Ascending aorta (tissue), 2 donors: ENCODE measurements at regions of chr11 and their contacts with region 1.

Region 1: DNA sequence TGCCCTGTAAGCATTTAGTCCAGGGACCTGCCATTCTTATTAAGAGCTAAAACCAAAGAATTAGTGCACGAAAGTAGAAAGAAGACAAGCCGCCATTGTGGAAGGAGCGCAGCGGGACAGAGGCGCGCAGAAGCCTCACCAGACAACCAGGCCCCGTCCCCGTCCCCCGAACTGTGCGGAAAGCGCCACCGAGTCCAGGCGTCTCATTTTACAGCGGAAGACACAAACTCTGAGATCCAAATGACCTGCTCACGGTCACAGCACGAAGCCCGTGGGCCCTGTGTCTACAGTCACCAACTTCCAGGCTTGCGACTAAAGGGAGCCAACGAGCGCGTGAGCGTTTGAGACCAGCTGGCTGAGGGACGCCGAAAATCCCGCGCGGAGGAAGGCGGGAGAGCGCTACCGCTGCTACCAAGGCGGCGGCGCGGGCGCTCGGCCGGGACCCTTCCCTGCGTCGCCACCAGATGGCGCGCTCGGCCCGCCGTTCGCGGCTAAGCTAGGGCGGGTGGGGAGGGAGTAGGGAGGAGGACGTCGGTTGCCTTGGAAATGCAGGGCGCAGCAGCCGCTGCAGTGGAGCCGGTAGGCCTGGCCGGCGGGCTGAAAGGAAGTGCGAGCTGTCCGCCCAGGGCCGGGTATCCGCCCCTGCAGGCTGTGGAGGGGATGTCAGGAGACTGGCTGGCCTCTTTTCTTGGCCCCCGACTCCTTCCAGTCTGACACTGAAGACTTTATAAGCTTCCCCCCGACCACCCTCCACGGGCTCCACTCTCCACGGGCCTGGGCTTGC is 434 bp upstream of the CCDC83 start:
- DNase-seq: peak; percentile 65 to 95
- H3K4me3 ChIP-seq: peak overlapping the region; percentile 73 to 77
- H3K27ac ChIP-seq: peak overlapping the region; percentile 79 to 83
- H3K4me1 ChIP-seq: peaks cover 0 to 7% of the 10 kb centered on the region in 2 donors
- H3K27me3 ChIP-seq: no peaks in the 10 kb centered on the region
- CTCF ChIP-seq: peak; percentile 94 to 99 (median 99)

Region 2: DNA sequence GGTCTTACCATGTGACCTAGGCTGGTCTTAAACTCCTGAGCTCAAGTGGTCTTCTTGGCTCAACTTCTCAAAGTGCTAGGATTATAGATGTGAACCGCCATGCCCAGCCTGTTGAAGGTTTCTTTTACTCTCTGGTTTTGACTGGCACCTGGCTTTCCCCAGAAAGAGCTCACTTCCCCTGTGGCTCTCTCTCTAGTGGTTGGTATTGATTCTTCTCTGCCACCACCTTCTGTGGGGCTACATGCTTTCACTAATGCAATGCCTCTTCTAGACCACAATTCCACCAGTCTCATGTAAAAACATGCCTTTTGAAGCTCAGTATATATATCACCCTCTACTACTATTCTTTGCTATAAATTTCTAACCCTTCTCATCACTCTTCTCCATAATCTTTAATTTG is 67.6 kb after region 1 on chr11:
- intact Hi-C with region 1: no loop called
- DNase-seq: no peak
- H3K4me3 ChIP-seq: no peak overlapping the region
- H3K27ac ChIP-seq: no peak overlapping the region
- H3K4me1 ChIP-seq: no peaks in the 10 kb centered on the region
- H3K27me3 ChIP-seq: no peaks in the 10 kb centered on the region
- CTCF ChIP-seq: no peak

Region 3: GRCh38 chr11:85977751-85978160 is 123.0 kb after region 1 on chr11:
- intact Hi-C with region 1: loop called (anchors 10 kb)
- DNase-seq: no peak
- H3K4me3 ChIP-seq: no peak overlapping the region
- H3K27ac ChIP-seq: no peak overlapping the region
- H3K4me1 ChIP-seq: peaks cover 0 to 22% of the 10 kb centered on the region in 2 donors
- H3K27me3 ChIP-seq: no peaks in the 10 kb centered on the region
- CTCF ChIP-seq: no peak

Region 4: DNA sequence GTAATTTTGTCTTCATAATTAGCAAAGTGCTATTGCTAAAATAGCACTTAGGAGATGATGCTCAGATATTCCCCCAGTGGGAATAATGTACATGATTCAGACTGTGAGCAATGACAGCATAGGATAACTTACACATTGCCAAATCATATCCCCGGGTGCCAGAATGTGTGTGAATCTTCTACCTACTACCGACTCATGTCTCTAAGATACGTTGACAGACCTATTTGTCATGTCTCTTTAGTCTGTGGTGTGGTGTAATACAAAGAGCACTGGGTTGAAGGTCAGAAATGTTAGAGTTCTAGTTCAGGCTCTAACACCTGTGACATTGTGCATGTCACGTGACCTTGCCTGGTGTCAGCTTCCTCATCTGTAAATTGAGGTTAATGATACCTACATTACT is 245.1 kb after region 1 on chr11:
- intact Hi-C with region 1: no loop called
- DNase-seq: no peak
- H3K4me3 ChIP-seq: no peak overlapping the region
- H3K27ac ChIP-seq: no peak overlapping the region
- H3K4me1 ChIP-seq: no peaks in the 10 kb centered on the region
- H3K27me3 ChIP-seq: no peaks in the 10 kb centered on the region
- CTCF ChIP-seq: no peak

Region 5: DNA sequence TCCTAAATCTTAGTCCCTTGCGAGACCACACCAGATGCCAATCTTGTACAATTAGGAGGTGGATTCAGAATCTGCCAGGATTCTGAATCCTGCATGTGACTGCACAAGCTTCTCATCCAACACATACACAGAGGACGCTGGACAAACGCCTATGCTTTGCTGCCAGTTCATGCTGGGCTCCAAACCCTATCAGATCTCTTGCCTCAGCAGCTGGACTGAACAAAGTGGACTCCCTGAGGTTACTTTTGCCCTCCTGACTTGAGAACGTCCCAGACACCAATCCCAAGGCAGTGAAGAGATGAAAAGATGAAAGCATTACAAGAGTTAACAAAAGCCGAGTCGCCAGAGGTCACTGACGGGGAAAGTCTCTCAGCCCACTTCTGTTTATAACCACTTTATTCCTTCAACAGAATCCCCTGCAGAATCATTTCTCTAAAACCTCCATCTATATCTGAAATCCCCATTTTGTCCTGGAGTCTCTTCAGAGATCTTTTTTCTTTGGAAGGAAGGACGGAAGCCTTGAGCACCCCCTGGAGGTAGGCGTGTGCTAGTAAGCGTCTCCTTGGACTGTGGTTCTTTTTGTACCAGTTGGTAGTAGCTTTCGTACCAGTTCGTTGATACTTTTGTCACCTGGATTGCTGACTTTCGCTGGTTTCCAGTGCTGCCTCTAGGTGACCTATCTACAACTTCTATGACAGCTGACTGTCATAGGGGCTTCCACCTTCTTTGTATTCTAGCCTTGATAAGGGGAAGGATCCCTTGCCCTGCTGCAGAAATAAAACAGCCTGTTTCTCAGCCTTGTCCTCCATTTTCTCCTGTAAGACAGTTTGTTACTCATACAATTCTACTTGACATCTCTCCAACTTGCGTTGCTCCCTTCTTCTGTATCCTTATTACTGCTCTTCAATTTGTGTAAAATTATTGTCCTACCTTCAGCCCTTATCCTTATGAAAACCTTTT is 363.7 kb after region 1 on chr11:
- intact Hi-C with region 1: loop called (anchors 1 kb)
- DNase-seq: peak in 1 of 2 donors; percentile 77
- H3K4me3 ChIP-seq: peak overlapping the region; percentile 37 to 53
- H3K27ac ChIP-seq: peak overlapping the region; percentile 35 to 39
- H3K4me1 ChIP-seq: peaks cover 0 to 10% of the 10 kb centered on the region in 2 donors
- H3K27me3 ChIP-seq: no peaks in the 10 kb centered on the region
- CTCF ChIP-seq: peak; percentile 76 to 91 (median 91)

Region 6: DNA sequence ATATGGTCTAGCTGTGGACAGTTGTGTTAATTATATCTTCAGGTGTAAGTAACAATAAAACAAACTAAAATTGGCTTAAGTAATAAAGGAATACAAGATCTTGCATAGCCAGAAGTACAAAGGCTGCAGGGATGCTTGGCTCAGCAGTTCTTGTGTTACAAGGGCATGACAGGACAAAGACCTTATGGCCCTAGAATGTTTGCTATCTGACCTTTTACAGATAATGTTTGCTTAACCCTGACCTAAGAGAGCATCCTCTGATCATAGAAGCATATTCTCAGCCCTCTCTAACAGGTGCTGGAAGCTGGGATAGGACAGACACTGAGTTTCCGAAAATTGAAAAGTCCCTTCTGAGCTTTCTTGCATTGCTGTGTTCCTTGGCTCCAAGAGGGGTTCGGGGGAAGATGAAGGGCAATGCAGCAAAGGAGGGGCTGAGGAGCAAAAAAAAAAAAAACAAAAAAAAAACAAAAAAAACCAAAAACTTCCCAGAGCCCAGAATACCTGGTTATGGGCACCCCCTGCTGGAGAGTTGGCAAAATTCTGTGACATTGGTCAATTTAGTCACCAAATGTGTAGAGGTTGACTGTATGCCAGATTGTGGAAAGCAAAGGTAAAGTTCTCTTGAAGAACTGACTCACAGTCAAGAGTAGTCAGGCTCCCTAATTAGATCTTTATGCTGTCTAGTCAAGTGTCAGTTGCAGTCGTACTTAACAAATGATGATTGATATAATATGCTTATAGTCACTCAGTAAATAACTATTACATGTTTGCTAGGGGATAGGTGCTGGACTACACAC is 436.9 kb after region 1 on chr11:
- intact Hi-C with region 1: loop called (anchors 2 kb)
- DNase-seq: no peak
- H3K4me3 ChIP-seq: no peak overlapping the region
- H3K27ac ChIP-seq: no peak overlapping the region
- H3K4me1 ChIP-seq: no peaks in the 10 kb centered on the region
- H3K27me3 ChIP-seq: no peaks in the 10 kb centered on the region
- CTCF ChIP-seq: peak; percentile 38 to 62 (median 39)